ENCODE measurements at regions of chr14 and their contacts with region 1.

Region 1: GRCh38 chr14:69242311-69243224 is 17.4 kb upstream of the GALNT16 start:
- DNase-seq: peak in 4 of 5 donors; percentile 53 to 79 (median 59)
- H3K4me3 ChIP-seq: no peak overlapping the region
- H3K27ac ChIP-seq: no peak overlapping the region
- H3K4me1 ChIP-seq: peaks cover 1% of the 10 kb centered on the region
- H3K27me3 ChIP-seq: no peaks in the 10 kb centered on the region
- CTCF ChIP-seq: peak; percentile 57 to 80 (median 76)
- EP300 ChIP-seq: no peak
- POLR2A ChIP-seq: no peak

Region 2: DNA sequence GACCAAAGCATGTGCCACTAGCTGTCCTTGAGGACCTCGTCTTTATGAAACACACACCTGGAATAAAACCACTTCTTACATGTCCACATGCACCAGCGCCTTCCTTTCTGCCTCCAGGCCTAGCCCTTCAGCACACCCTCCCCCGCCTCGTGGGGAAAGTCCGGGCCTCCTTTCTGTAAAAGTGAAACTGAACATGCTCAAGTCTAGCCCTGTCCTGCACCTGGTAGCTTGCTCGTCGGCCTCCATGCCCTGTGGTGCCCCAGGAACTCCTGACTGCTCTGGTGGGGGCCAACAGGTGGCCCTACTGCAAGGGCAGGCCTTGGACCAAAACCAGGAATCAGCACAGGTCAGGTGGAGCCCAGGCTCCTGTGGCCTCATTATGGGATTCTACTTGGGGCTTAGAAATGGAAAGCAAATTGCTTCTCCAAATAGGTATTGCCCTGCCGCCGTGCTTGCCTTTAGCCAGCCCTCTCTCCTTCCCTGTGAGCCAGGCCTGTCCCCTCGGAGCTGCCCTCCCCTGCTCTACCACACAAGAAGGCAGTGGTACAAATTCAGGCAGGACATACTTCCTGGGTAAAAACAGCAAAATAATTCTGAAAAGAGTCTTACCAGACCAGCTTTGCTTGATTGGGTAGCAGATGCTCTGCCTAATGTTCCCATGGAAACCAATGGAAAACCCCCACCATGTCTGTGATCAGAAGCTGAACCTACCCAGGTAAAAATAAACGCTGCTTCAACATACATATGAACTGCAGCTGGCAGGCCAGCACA is 112.0 kb after region 1 on chr14:
- intact Hi-C with region 1: loop called in 1 of 4 experiments (anchors 10 kb)
- DNase-seq: no peak
- H3K4me3 ChIP-seq: no peak overlapping the region
- H3K27ac ChIP-seq: no peak overlapping the region
- H3K4me1 ChIP-seq: no peaks in the 10 kb centered on the region
- H3K27me3 ChIP-seq: no peaks in the 10 kb centered on the region
- CTCF ChIP-seq: no peak
- EP300 ChIP-seq: no peak
- POLR2A ChIP-seq: no peak

Region 3: GRCh38 chr14:69363055-69363454 is 120.5 kb after region 1 on chr14:
- intact Hi-C with region 1: loop called in 2 of 4 experiments (anchors 10 kb)
- DNase-seq: peak in 2 of 5 donors; percentile 41 to 48
- H3K4me3 ChIP-seq: no peak overlapping the region
- H3K27ac ChIP-seq: no peak overlapping the region
- H3K4me1 ChIP-seq: no peaks in the 10 kb centered on the region
- H3K27me3 ChIP-seq: no peaks in the 10 kb centered on the region
- CTCF ChIP-seq: peak in 2 of 3 donors; percentile 16 to 28
- EP300 ChIP-seq: no peak
- POLR2A ChIP-seq: no peak

Region 4: GRCh38 chr14:69460093-69460701 is 217.6 kb after region 1 on chr14:
- intact Hi-C with region 1: loop called (anchors 2 to 5 kb)
- DNase-seq: peak; percentile 33 to 73 (median 52)
- H3K4me3 ChIP-seq: no peak overlapping the region
- H3K27ac ChIP-seq: no peak overlapping the region
- H3K4me1 ChIP-seq: no peaks in the 10 kb centered on the region
- H3K27me3 ChIP-seq: no peaks in the 10 kb centered on the region
- CTCF ChIP-seq: peak; percentile 48 to 79 (median 76)
- EP300 ChIP-seq: no peak
- POLR2A ChIP-seq: no peak

Region 5: GRCh38 chr14:69574263-69574953 is 331.8 kb after region 1 on chr14 and contains the start of gene CCDC177:
- intact Hi-C with region 1: loop called in 2 of 4 experiments (anchors 5 to 10 kb)
- DNase-seq: peak; percentile 29 to 70 (median 53)
- H3K4me3 ChIP-seq: no peak within 1 kb of the TSS
- H3K27ac ChIP-seq: no peak within 1 kb of the TSS
- H3K4me1 ChIP-seq: peaks cover 14% of the 10 kb centered on the region
- H3K27me3 ChIP-seq: peaks cover 3% of the 10 kb centered on the region
- CTCF ChIP-seq: peak; percentile 42 to 63 (median 59)
- EP300 ChIP-seq: no peak
- POLR2A ChIP-seq: no peak
- total RNA-seq, gene CCDC177: not detected

Measured in ovary (tissue), 10 donors.